ENCODE measurements at regions of chr17 and their contacts with region 1.

Region 1: GRCh38 chr17:48678141-48678971 is 44.0 kb downstream of the PRAC1 start:
- DNase-seq: peak; percentile 89
- CTCF ChIP-seq: peak; percentile 92

Region 2: DNA sequence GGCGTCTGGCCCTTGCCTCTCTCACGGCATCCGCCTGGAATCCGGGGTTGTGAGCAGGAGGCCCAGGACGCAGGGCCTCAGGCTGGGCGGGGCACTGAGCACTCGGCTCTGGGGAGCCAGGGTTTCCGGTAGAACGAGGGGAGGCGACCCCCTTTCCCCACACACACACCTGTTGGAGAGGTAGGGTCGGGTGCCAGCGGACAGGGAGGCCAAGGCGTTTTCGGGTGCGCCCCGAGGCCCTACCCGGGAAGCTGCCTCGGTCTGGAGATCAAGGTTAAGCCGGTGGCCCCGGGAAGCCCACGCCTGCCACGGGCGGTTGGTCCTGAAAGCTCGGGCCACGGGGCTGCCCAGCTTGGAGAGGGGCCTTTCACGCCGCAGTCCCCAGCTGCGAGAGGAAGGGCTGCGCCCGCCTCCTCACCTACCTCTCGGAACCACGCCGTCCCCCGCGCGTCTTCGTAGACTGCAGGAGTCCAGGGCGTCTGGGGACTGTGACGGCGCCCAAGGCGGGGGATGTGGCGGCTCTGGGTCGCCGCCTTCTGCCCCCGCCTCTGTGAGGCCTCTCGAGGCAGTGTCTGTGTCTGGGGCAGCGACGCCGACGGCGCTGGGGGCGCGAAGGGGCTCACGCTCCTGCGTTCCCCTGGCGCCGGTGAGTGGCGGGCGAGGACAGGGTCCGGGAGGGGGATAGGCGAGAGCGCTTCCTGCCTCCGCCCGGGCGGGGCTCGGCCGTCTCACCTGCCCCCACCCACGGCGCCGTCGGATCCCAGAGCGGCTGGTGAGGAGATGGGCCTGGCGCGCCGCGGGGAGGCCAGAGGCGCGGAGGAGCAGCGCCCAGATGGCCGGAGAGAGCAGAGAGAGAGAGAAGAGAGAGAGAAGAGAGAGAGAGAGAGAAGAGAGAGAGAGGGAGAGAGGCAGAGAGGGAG is 31.9 kb before region 1 on chr17:
- CTCF ChIA-PET with region 1: interaction called, 10 read pairs
- POLR2A ChIA-PET with region 1: no interaction called
- DNase-seq: peak; percentile 67
- CTCF ChIP-seq: no peak

Region 3: DNA sequence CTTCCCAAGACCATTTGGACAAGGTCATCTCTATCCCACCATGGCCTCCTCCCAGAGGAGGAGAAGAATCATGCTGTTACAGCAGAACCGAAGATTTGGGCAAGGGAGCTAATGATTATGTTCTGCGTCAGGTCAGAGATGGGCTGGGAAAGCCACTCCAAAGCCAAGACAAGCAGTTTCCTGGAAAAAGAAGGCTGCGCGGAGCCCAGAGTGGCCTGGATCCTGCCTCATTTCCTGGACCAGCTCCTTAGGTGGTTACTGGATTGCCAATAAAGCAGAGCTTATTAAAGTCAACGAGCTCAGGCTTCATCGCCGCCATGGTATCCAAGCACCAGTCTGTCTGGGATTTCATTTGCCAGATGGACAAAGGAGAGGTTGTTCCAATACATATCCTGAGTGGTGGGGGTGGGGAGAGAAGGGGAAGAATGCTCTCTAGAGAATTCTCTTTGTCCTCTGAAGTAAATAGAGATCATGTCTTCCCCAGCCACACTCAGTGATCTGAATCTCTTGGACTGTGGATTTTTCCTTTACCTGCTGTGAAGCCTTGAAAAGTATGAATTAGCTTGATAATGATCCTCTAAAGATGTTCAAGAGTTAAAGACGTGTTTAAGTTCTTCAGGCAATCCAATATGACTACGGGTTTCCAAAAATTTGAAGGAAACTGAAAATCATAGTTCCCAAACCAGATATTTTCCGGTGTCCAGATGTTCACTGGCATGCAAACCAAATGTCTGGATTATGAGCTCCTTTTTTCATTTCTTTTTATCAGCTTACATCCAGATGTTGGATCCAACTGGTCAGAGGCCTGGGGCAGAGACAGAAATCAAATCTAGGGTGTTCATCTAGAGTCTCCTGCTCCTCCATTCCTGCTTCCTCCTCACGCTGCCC is 26.2 kb after region 1 on chr17:
- CTCF ChIA-PET with region 1: interaction called, 17 read pairs
- POLR2A ChIA-PET with region 1: no interaction called
- DNase-seq: no peak
- CTCF ChIP-seq: no peak

Region 4: DNA sequence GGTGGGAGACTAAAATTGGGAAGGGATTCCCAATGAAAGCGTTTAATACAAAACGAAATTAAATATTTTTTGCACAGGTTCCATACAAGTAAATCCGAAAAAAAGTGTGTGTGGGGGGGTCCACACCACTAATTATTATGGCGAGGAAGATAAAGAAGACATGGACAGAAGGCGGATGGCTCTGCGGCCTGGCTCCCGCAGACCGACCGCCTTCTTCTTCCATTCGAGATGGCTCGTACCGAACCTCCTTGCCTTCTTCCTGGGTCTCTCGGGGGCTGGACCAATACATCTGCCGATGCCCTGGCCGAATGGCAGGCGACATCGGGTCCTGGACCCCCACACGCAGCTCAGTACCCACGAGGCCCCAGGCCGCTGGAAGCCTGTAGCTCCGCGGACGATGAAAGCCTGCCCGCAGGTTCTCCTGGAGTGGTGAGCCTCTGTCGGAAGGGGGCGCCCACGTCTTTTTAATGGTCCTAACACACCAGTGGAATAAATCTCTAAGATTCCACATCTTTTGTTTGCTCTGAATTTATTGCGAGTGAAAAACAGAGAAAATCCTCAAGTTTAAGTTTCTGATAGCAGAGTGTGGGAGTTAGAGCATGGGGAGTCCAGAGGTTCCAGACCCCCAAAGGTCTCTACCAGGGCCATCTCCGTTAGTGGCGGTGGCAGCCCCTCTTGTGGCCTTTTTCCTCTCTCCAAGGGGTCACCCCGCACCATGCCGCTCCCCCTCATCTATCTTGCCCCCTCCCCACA is 46.1 kb after region 1 on chr17:
- CTCF ChIA-PET with region 1: interaction called, 31 read pairs
- POLR2A ChIA-PET with region 1: no interaction called
- DNase-seq: peak; percentile 71
- CTCF ChIP-seq: peak; percentile 82

Region 5: DNA sequence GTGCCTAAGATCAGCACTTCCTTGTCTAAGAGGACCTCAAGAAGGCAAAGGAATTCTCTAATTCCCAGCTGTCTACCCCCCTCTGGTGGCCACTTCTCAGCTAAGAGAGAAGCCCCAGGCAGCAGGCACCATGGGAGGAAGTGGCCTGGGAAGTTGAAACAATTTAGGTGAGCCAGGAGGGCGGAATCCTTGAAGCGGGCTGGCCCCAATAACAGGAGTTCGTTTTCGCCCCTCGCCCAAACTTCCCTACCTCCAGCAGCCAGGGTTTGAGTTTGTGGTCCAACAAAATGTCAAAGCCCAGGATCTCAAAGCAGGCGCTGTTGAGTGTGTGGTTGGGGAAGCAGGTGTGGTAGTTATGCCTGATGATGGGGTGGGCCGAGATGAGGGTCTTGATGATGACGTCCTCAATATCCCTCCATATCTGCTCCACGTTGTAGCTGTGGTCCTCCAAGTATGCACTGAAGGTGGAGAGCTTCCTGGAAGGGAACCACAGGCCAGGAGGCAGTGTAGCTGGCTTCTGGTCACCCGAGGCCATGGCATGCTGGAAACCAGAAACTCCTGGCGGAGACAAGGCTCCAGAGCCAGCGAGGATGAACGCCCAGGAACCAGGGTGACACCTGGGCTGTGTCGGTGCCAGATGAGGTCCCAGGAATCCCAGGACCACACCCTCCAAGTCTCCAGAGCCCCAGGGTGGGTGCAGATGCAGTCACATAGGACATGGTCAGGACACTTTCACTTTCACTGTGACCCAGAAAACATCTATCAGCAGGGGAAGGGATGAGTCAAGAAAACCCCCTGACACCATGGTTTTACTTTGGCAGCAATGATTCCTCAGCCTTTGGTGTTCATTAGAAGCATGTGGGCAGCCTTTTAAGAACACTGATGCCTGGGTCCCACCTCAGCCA is 113.0 kb after region 1 on chr17:
- CTCF ChIA-PET with region 1: interaction called, 32 read pairs
- POLR2A ChIA-PET with region 1: no interaction called
- DNase-seq: peak; percentile 70
- CTCF ChIP-seq: peak; percentile 62

Measured in GM10248 (cell line).